ENCODE measurements at regions of chr1 and their contacts with region 1.

Region 1: GRCh38 chr1:153572569-153573015 is 6.9 kb upstream of the S100A2 start:
- DNase-seq: no peak
- H3K4me3 ChIP-seq: no peak overlapping the region
- CTCF ChIP-seq: peak; percentile 91

Region 2: DNA sequence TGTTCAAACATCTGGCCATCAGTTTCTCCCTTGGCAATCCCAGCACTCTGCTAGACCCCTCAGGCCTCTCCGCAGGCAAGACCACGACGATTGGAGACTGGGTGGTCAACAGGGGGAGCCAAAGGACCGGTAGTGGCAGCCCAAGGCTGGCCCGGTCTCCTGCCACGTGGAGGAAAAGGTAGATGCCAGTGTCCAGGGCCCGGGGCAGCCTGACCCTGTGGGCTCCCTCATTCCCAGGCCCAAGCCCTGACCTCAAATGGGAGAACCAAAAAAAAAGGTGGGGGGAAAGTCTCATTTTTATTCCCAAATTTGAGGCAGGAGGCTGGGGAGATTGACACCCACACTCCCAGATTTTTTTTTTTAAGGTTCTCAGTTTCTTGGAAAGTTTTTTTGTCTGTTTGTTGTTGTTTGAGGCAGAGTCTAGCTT is 61.6 kb before region 1 on chr1:
- CTCF ChIA-PET with region 1: interaction called, 401 read pairs
- POLR2A ChIA-PET with region 1: interaction called, 7 read pairs
- DNase-seq: no peak
- H3K4me3 ChIP-seq: no peak overlapping the region
- CTCF ChIP-seq: peak; percentile 95

Region 3: GRCh38 chr1:153545067-153546055 is 27.2 kb before region 1 on chr1 and contains the start of gene S100A4:
- CTCF ChIA-PET with region 1: interaction called, 92 read pairs
- POLR2A ChIA-PET with region 1: interaction called, 13 read pairs
- DNase-seq: peak; percentile 65
- H3K4me3 ChIP-seq: peak within 1 kb of the TSS; percentile 56
- CTCF ChIP-seq: no peak

Region 4: DNA sequence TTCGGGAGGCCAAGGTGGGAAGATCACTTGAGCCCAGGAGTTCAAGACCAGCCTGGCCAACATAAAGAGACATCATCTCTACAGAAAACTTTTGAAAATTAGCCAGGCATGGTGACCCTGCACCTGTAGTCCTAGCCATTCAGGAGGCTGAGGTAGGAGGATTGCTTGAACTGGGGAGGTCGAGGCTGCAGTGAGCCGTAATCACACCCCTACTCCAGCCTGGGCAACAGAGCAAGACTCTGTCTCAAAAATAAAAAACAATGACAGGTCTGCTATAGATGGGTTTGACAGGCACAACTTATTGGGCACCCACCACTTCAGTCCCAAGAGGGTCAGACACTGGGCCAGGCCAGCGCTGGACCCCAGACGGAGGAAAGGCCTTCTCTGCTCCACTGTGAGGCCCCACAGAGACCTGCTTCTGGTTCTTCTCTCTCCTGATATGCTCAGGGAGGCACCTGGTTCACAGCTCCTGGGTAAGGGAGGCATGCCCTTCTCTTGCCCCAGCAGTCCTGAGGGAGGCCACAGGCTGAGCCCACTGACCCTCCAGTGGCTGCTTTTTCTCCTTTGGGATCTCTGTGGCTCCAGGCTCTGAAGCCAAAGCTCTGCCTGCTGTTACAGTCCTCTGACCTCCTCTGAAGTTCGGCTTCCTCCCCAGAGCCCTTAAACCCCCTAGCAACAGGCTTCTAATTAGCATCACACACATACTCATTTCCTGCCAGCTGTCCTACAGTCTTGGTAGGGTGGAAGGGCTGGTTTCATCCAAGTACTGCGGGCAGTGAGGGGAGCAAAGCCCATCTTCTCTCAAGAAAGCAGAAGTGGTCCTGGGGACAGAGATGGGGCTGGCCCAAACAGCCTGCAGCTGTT is 25.9 kb after region 1 on chr1:
- CTCF ChIA-PET with region 1: interaction called, 21 read pairs
- POLR2A ChIA-PET with region 1: no interaction called
- DNase-seq: no peak
- H3K4me3 ChIP-seq: no peak overlapping the region
- CTCF ChIP-seq: no peak

Region 5: DNA sequence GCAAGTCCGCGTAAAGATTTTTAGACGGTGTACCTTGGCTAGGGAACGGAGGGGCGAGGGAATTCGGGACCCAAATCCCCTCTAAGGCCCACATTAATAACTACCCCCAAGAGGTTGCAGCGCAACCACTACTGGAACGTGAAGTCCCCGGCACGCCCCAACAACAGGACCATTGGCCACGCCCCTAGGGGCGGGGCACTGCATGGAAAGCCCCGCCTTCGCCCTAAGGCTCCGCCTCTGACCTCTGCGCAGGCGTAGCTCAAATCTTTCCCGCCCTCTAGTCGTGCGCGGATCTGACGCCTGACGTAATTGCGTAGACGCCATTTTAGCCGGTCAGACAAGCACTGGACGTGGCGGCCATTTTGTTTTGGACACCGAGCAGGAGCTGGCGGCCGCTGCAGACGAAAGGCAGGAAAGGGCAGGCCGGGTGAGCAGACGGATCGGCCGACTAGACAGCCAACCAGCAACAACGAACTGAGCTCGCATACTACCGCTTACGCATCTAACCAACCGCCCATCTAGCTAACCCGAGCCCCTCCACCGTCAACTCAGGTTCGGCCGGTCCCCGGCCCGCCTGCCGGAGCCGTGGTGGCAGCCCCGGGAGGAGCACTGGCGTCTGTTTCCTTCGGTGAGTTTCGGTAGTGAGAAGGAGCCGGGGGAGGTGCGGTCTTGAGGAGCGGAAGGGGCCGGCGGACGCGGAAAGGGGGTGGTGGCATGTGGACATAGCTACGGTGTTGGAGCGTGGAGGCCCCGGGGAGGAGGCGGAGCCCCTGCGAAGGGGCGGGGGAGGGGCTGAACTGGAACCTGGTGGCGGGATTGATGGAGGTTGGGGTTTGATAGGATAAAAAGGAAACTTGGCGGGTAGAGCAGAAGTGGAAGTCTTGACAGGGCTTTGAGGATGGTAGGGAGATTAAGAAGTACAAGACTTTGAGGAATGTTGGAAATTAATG is 61.4 kb after region 1 on chr1 and contains the start of gene CHTOP:
- CTCF ChIA-PET with region 1: interaction called, 59 read pairs
- POLR2A ChIA-PET with region 1: interaction called, 5 read pairs
- DNase-seq: peak; percentile 90
- H3K4me3 ChIP-seq: peak within 1 kb of the TSS; percentile 97
- CTCF ChIP-seq: no peak

Region 6: GRCh38 chr1:153670859-153671627 is 98.5 kb after region 1 on chr1 and contains the start of gene ILF2:
- CTCF ChIA-PET with region 1: interaction called, 11 read pairs
- POLR2A ChIA-PET with region 1: no interaction called
- DNase-seq: peak; percentile 100
- H3K4me3 ChIP-seq: peak within 1 kb of the TSS; percentile 89
- CTCF ChIP-seq: peak; percentile 3